WTC11 (cell line): ENCODE measurements at regions of chr10 and their contacts with region 1.

Region 1: GRCh38 chr10:104121520-104122224 is at the start of gene SFR1:
- DNase-seq: peak; percentile 99
- ATAC-seq: peak; percentile 92
- H3K4me3 Mint-ChIP-seq: peak within 1 kb of the TSS; percentile 92
- H3K27ac Mint-ChIP-seq: peak within 1 kb of the TSS; percentile 100
- H3K4me1 Mint-ChIP-seq: peaks cover 29% of the 10 kb centered on the region
- H3K27me3 Mint-ChIP-seq: no peaks in the 10 kb centered on the region; the same call in 1 of the 2 replicates
- CTCF ChIP-seq: 0 out of 2 replicates have a peak, but pooled peaks have one; percentile 42
- total RNA-seq, gene SFR1: 9.2 to 11.6 TPM (median 9.9 TPM) in 3 replicates

Region 2: DNA sequence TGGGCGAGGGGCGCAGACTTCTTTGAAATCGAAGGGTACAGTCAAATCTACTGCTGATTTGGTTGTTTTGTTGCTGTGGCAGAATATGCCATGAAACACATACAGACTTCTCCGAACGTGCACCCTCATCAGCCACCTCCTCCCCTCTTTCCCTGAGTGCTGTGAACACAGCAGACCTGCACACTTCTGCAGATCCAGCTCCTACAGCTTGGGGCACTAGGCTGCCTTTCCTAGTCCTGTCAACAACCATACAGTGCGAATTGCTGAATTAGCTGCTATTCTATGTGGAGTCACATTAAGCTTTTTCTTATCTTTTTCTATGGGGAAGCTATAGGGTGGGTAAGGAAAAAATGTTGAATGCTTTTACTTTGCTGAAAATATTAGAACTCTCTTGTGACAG is 93.5 kb before region 1 on chr10:
- CTCF ChIA-PET with region 1: interaction called, 13 read pairs
- POLR2A ChIA-PET with region 1: interaction called, 5 read pairs
- DNase-seq: peak; percentile 52
- ATAC-seq: peak; percentile 96
- H3K4me3 Mint-ChIP-seq: no peak overlapping the region
- H3K27ac Mint-ChIP-seq: no peak overlapping the region
- H3K4me1 Mint-ChIP-seq: peaks cover 20% of the 10 kb centered on the region
- H3K27me3 Mint-ChIP-seq: no peaks in the 10 kb centered on the region
- CTCF ChIP-seq: no peak

Region 3: GRCh38 chr10:104045151-104046089 is 76.3 kb before region 1 on chr10:
- CTCF ChIA-PET with region 1: interaction called, 16 read pairs
- POLR2A ChIA-PET with region 1: interaction called, 5 read pairs
- DNase-seq: peak; percentile 78
- ATAC-seq: peak; percentile 99
- H3K4me3 Mint-ChIP-seq: no peak overlapping the region
- H3K27ac Mint-ChIP-seq: no peak overlapping the region
- H3K4me1 Mint-ChIP-seq: peaks cover 6% of the 10 kb centered on the region
- H3K27me3 Mint-ChIP-seq: peaks cover 3% of the 10 kb centered on the region; the same call in 1 of the 2 replicates
- CTCF ChIP-seq: 0 out of 2 replicates have a peak, but pooled peaks have one; percentile 21

Region 4: DNA sequence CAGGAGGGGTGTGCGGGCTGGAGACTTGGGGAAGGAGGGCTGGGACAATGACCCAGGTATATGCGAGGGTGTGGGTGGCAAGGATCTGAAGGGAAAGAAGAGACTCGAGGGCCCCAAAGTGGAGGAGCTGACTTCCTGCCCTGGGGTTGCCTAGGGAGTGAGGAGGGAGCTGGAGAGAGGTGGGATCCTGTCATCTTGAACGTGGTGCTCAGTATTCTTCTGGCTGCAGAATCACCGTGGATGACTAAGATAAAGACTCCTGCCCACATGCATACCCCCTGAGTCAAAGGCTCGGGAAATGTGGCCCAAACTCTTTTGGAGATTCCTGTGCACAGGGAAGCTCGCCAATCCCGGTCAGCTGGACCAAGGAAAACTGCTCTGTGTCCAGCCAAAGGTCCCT is 67.2 kb before region 1 on chr10:
- CTCF ChIA-PET with region 1: interaction called, 35 read pairs
- POLR2A ChIA-PET with region 1: interaction called, 34 read pairs
- DNase-seq: no peak
- ATAC-seq: no peak
- H3K4me3 Mint-ChIP-seq: no peak overlapping the region
- H3K27ac Mint-ChIP-seq: no peak overlapping the region
- H3K4me1 Mint-ChIP-seq: peaks cover 24% of the 10 kb centered on the region
- H3K27me3 Mint-ChIP-seq: no peaks in the 10 kb centered on the region
- CTCF ChIP-seq: no peak

Region 5: GRCh38 chr10:104067525-104067924 is 54.1 kb before region 1 on chr10:
- CTCF ChIA-PET with region 1: interaction called, 6 read pairs
- POLR2A ChIA-PET with region 1: interaction called, 15 read pairs
- DNase-seq: peak; percentile 58
- ATAC-seq: peak; percentile 80
- H3K4me3 Mint-ChIP-seq: peak overlapping the region; percentile 37
- H3K27ac Mint-ChIP-seq: peak overlapping the region; percentile 88
- H3K4me1 Mint-ChIP-seq: peaks cover 48% of the 10 kb centered on the region
- H3K27me3 Mint-ChIP-seq: no peaks in the 10 kb centered on the region
- CTCF ChIP-seq: no peak

Region 6: GRCh38 chr10:104139221-104139620 is 17.5 kb after region 1 on chr10:
- CTCF ChIA-PET with region 1: interaction called, 22 read pairs
- POLR2A ChIA-PET with region 1: interaction called, 6 read pairs
- DNase-seq: no peak
- ATAC-seq: no peak
- H3K4me3 Mint-ChIP-seq: no peak overlapping the region
- H3K27ac Mint-ChIP-seq: no peak overlapping the region
- H3K4me1 Mint-ChIP-seq: peaks cover 22% of the 10 kb centered on the region
- H3K27me3 Mint-ChIP-seq: no peaks in the 10 kb centered on the region; the same call in 1 of the 2 replicates
- CTCF ChIP-seq: peak; percentile 24; the same call in 1 of the 2 replicates

Region 7: DNA sequence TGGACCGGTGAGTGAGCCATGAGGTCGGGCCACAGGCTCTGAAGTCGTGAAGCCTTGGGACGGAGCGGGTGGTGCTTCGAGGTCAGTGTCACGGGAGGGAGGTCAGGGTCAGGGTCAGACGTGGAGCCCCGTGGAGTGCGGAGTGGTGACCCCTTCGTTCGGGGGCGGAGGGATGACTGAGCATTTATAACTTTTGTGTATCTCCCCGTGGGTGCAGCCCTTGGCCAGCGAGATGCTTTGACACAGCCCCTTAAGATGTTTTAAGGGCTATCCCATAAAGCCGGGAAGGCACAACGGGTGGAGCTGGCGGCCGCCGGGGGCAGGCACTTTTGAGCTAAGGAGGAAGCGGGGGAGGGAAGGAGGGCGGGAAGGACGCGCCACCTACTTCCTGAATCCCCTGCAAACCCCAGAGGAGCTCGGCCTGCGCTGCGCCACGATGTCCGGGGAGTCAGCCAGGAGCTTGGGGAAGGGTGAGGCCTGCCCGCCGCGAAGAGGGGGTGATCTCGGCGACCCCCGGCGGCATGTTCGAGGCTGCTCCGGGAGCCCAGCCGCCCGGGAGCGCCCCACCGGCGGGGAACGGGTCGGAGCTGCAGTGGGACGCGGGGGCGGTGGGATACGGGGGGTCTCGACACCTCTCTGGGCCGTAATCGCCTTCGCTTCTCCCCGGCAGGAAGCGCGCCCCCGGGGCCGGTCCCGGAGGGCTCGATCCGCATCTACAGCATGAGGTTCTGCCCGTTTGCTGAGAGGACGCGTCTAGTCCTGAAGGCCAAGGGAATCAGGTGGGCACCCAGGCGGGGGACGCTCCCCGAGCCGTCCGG is 133.0 kb after region 1 on chr10 and contains the start of gene GSTO1:
- CTCF ChIA-PET with region 1: interaction called, 11 read pairs
- POLR2A ChIA-PET with region 1: interaction called, 3 read pairs
- DNase-seq: peak; percentile 65
- ATAC-seq: peak; percentile 74
- H3K4me3 Mint-ChIP-seq: peak within 1 kb of the TSS; percentile 81
- H3K27ac Mint-ChIP-seq: peak within 1 kb of the TSS; percentile 87
- H3K4me1 Mint-ChIP-seq: peaks cover 60% of the 10 kb centered on the region
- H3K27me3 Mint-ChIP-seq: peaks cover 13% of the 10 kb centered on the region
- CTCF ChIP-seq: no peak
- total RNA-seq, gene GSTO1: 87.9 to 99.5 TPM (median 99.2 TPM) in 3 replicates